CD8-positive, alpha-beta T cell (primary cell): ENCODE measurements at regions of chr7 and their contacts with region 1.

Region 1: DNA sequence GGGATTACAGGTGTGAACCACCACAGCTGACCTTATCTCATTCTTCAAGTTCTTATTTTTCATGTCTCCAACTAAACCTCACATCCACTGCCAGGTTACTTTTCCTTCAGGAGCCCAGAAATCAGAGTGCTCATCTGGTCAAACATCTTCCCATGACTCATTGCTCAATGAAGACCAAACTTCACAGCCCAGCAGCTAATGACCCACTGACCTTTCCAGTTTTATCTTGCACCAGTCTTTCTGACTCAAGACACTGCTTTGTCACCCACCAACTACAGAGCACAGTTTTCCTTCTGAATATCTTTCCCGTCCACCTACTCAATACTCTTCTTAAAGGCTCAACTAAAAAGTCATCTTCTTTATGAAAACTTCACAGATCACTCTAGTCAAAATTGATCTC is 245.1 kb downstream of the CHCHD3 start:
- DNase-seq: no peak
- ATAC-seq: no peak
- H3K4me3 ChIP-seq: no peak overlapping the region
- H3K4me3 Mint-ChIP-seq: no peak overlapping the region
- H3K27ac ChIP-seq: no peak overlapping the region
- H3K27ac Mint-ChIP-seq: no peak overlapping the region
- H3K4me1 ChIP-seq: no peaks in the 10 kb centered on the region
- H3K4me1 Mint-ChIP-seq: no peaks in the 10 kb centered on the region
- H3K27me3 ChIP-seq: no peaks in the 10 kb centered on the region
- H3K27me3 Mint-ChIP-seq: no peaks in the 10 kb centered on the region
- CTCF ChIP-seq: no peak

Region 2: GRCh38 chr7:132899833-132900232 is 63.1 kb after region 1 on chr7:
- CTCF ChIA-PET with region 1: no interaction called
- POLR2A ChIA-PET with region 1: no interaction called
- intact Hi-C with region 1: loop called in 1 of 2 experiments (anchors 1 kb)
- DNase-seq: no peak
- ATAC-seq: no peak
- H3K4me3 ChIP-seq: no peak overlapping the region
- H3K4me3 Mint-ChIP-seq: no peak overlapping the region
- H3K27ac ChIP-seq: no peak overlapping the region
- H3K27ac Mint-ChIP-seq: no peak overlapping the region
- H3K4me1 ChIP-seq: no peaks in the 10 kb centered on the region
- H3K4me1 Mint-ChIP-seq: no peaks in the 10 kb centered on the region
- H3K27me3 ChIP-seq: no peaks in the 10 kb centered on the region
- H3K27me3 Mint-ChIP-seq: no peaks in the 10 kb centered on the region
- CTCF ChIP-seq: no peak

Region 3: GRCh38 chr7:133301444-133301843 is 464.7 kb after region 1 on chr7:
- CTCF ChIA-PET with region 1: no interaction called
- POLR2A ChIA-PET with region 1: no interaction called
- intact Hi-C with region 1: no loop called
- DNase-seq: no peak
- ATAC-seq: no peak
- H3K4me3 ChIP-seq: no peak overlapping the region
- H3K4me3 Mint-ChIP-seq: no peak overlapping the region
- H3K27ac ChIP-seq: no peak overlapping the region
- H3K27ac Mint-ChIP-seq: no peak overlapping the region
- H3K4me1 ChIP-seq: no peaks in the 10 kb centered on the region
- H3K4me1 Mint-ChIP-seq: peaks cover 11% of the 10 kb centered on the region
- H3K27me3 ChIP-seq: no peaks in the 10 kb centered on the region
- H3K27me3 Mint-ChIP-seq: no peaks in the 10 kb centered on the region
- CTCF ChIP-seq: no peak